Activated CD4-positive, alpha-beta T cell treated with anti-CD3 and anti-CD28 coated beads for 36 hours (primary cell): ENCODE measurements at regions of chrX and their contacts with region 1.

Region 1: GRCh38 chrX:70133303-70134115 is at the start of gene IGBP1:
- DNase-seq: peak; percentile 83
- ATAC-seq: peak; percentile 85
- H3K4me3 Mint-ChIP-seq: peak within 1 kb of the TSS; percentile 99
- H3K27ac Mint-ChIP-seq: peak within 1 kb of the TSS; percentile 97
- H3K4me1 Mint-ChIP-seq: peaks cover 28% of the 10 kb centered on the region
- H3K27me3 Mint-ChIP-seq: no peaks in the 10 kb centered on the region
- total RNA-seq, gene IGBP1: 44.4 to 46.3 TPM

Region 2: DNA sequence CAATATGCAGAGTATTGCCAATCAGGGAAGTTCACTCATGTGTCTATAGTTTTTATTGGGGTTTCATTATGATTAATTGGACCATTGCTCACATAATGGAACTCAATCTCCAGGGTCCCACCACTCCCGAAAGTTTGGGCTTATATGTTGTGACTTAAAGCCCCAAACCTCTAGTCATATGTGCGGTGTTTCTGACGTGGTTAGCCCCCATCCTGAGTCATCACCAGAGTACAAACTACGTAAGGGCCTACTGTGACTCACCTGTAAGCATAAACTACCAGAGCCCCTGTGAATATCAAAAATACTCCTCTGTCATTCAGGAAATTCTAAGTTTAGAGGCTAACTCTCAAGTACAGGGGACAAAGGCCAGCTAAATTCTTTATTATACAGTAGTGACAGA is 1629.3 kb before region 1 on chrX:
- CTCF ChIA-PET with region 1: no interaction called
- POLR2A ChIA-PET with region 1: no interaction called
- intact Hi-C with region 1: loop called (anchors 10 kb)
- DNase-seq: peak; percentile 81
- ATAC-seq: peak; percentile 89
- H3K4me3 Mint-ChIP-seq: no peak overlapping the region
- H3K27ac Mint-ChIP-seq: peak overlapping the region; percentile 86
- H3K4me1 Mint-ChIP-seq: peaks cover 67% of the 10 kb centered on the region
- H3K27me3 Mint-ChIP-seq: no peaks in the 10 kb centered on the region

Region 3: GRCh38 chrX:69165087-69165651 is 968.3 kb before region 1 on chrX and contains the start of gene PJA1:
- CTCF ChIA-PET with region 1: no interaction called
- POLR2A ChIA-PET with region 1: no interaction called
- intact Hi-C with region 1: loop called in 1 of 2 experiments (anchors 2 kb)
- DNase-seq: peak; percentile 86
- ATAC-seq: peak; percentile 82
- H3K4me3 Mint-ChIP-seq: peak within 1 kb of the TSS; percentile 79
- H3K27ac Mint-ChIP-seq: peak within 1 kb of the TSS; percentile 83
- H3K4me1 Mint-ChIP-seq: peaks cover 29% of the 10 kb centered on the region
- H3K27me3 Mint-ChIP-seq: no peaks in the 10 kb centered on the region
- total RNA-seq, gene PJA1: 18.9 to 19.5 TPM

Region 4: DNA sequence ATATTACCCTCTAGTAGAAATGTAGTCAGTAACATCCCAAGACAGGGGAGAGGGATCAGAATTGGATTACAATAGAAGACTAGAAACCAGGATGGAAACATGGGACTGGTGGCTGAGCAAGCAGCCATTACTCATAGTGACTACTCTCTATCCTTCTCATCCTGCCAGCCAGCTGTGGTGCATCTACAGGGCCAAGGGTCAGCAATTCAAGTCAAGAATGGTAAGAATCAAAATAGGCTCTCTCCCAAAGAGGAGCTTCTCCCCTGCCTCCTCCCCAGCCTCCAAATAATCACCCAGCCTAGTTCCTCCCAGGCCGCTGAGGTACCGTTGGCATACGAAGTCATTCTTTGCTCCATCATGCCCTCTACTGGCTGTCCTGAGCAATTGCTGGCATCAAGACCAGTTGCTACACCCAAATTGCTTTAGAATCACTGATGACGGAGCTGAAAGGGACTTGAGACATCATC is 103.2 kb before region 1 on chrX:
- CTCF ChIA-PET with region 1: interaction called, 6 read pairs
- POLR2A ChIA-PET with region 1: no interaction called
- intact Hi-C with region 1: loop called in 1 of 2 experiments (anchors 1 kb)
- DNase-seq: peak; percentile 50
- ATAC-seq: peak; percentile 78
- H3K4me3 Mint-ChIP-seq: no peak overlapping the region
- H3K27ac Mint-ChIP-seq: no peak overlapping the region
- H3K4me1 Mint-ChIP-seq: peaks cover 8% of the 10 kb centered on the region
- H3K27me3 Mint-ChIP-seq: no peaks in the 10 kb centered on the region

Region 5: DNA sequence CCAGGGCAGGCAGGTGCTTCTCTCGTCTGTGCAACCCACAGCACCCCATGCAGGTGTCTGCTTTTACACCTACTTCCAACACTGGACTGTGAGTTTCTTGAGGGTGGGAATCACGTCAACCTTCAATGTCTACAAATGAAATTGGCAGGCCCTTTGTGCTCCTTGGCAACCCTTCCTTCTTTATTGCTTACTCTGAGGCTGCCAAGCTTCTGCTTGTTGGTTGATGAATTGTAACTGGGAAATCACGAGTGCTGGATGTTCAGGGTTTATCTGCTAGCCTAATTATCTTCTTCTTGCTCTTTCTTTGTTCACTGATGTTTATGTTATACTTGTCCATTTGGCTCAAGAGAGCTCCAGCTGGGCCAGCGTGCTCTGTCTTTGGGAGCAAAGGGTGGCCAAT is 41.2 kb after region 1 on chrX:
- CTCF ChIA-PET with region 1: no interaction called
- POLR2A ChIA-PET with region 1: interaction called, 5 read pairs
- intact Hi-C with region 1: loop called in 1 of 2 experiments (anchors 1 kb)
- DNase-seq: no peak
- ATAC-seq: no peak
- H3K4me3 Mint-ChIP-seq: no peak overlapping the region
- H3K27ac Mint-ChIP-seq: no peak overlapping the region
- H3K4me1 Mint-ChIP-seq: peaks cover 10% of the 10 kb centered on the region
- H3K27me3 Mint-ChIP-seq: peaks cover 3% of the 10 kb centered on the region

Region 6: DNA sequence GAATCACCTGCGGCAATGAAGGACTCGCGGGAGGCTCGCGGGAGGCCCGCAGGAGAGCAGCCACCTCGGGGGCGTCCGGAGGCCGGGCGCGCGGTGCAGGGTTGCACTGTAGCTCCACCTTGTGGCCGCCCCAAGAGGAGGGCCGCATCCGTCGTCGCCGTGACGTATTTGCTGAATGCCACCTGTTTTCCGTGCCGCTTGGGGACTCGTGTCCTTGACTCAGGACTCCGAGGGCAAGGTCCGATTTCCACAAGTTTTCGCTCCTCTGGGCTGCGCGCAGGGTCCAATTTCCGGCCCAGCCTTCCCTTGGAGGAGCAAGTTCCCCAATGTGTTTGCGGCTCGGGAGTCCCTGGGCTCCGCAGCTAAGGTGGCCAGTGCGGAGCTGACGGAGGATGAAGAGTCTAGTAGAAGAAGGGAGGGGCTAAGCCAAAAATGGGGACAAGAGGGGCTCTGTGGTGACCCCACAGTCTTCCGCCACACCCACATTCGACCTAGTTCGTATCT is 300.4 kb after region 1 on chrX:
- CTCF ChIA-PET with region 1: interaction called, 4 read pairs
- POLR2A ChIA-PET with region 1: no interaction called
- intact Hi-C with region 1: loop called (anchors 1 to 10 kb)
- DNase-seq: peak; percentile 86
- ATAC-seq: peak; percentile 80
- H3K4me3 Mint-ChIP-seq: peak overlapping the region; percentile 85
- H3K27ac Mint-ChIP-seq: peak overlapping the region; percentile 89
- H3K4me1 Mint-ChIP-seq: peaks cover 11% of the 10 kb centered on the region
- H3K27me3 Mint-ChIP-seq: peaks cover 14% of the 10 kb centered on the region